K562 (cell line): ENCODE measurements at regions of chr11 and their contacts with region 1.

Region 1: GRCh38 chr11:76919887-76920746 is 59.4 kb downstream of the ACER3 start:
- DNase-seq: peak; percentile 61 to 87 (median 64)
- ATAC-seq: peak; percentile 85
- H3K4me3 ChIP-seq: no peak overlapping the region
- H3K27ac ChIP-seq: no peak overlapping the region
- H3K4me1 ChIP-seq: peaks cover 9 to 19% of the 10 kb centered on the region in 2 experiments; a peak in 4 of 5 replicates
- H3K27me3 ChIP-seq: no peaks in the 10 kb centered on the region
- CTCF ChIP-seq: peak; percentile 90 to 94 (median 93)
- EP300 ChIP-seq: no peak
- POLR2A ChIP-seq: no peak
- RAD21 ChIP-seq: peak; percentile 73 to 76

Region 2: DNA sequence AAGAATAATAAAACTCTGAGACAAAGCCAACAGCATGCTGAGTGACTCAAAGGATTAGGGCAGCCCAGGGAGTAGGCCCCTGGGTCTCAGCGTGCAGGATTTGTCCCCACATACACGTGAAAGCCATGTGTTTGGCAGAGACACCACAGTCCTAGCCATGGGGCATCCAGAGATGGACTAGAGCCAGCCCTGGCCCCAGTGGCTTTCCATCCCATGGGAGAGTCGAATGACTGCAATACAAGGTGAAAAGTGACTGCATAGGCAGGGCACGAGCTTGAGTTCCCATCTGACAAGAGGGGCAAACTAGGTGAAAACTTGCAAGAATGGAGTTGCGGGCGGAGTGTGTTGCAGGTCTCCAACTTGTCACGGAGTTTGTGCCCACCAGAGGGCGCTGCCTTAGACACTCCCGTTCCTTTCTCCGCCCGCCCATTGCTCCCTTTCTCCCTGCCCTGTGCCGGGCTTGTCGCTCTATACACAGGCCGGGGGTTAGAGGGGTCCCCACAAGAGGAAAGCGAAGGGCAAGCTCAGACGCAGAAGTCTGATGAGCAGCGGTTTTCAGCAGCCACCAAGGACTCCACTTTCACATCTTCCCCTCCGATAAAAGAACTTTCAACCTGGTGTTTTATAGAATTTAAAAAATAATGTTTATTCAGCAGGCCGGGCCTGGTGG is 112.8 kb before region 1 on chr11:
- CTCF ChIA-PET with region 1: interaction called, 54 read pairs
- POLR2A ChIA-PET with region 1: interaction called, 4 read pairs
- in situ Hi-C with region 1: loop called (anchors 5 kb)
- intact Hi-C with region 1: loop called (anchors 1 kb)
- DNase-seq: peak; percentile 84 to 92 (median 86)
- ATAC-seq: peak; percentile 98
- H3K4me3 ChIP-seq: no peak overlapping the region
- H3K27ac ChIP-seq: no peak overlapping the region
- H3K4me1 ChIP-seq: peaks cover 10 to 20% of the 10 kb centered on the region in 2 experiments; a peak in 4 of 5 replicates
- H3K27me3 ChIP-seq: no peaks in the 10 kb centered on the region
- CTCF ChIP-seq: peak; percentile 85 to 89 (median 89)
- EP300 ChIP-seq: no peak
- POLR2A ChIP-seq: no peak
- RAD21 ChIP-seq: peak; percentile 71 to 86

Region 3: GRCh38 chr11:76860539-76861475 is 59.3 kb before region 1 on chr11 and contains the start of gene ACER3:
- CTCF ChIA-PET with region 1: interaction called, 3 read pairs
- POLR2A ChIA-PET with region 1: interaction called, 4 read pairs
- in situ Hi-C with region 1: no loop called
- intact Hi-C with region 1: loop called (anchors 2 kb)
- DNase-seq: peak; percentile 96 to 99 (median 99)
- ATAC-seq: peak; percentile 97
- H3K4me3 ChIP-seq: peak within 1 kb of the TSS; percentile 94
- H3K27ac ChIP-seq: peak within 1 kb of the TSS; percentile 88
- H3K4me1 ChIP-seq: peaks cover 16 to 23% of the 10 kb centered on the region in 2 experiments; a peak in 4 of 5 replicates
- H3K27me3 ChIP-seq: no peaks in the 10 kb centered on the region
- CTCF ChIP-seq: peak in 1 of 3 experiments; percentile 26; a peak in 1 of 6 replicates
- EP300 ChIP-seq: no peak
- POLR2A ChIP-seq: peak; percentile 83
- RAD21 ChIP-seq: no peak
- polyA plus RNA-seq, gene ACER3: 2.0 to 3.0 TPM

Region 4: GRCh38 chr11:77047007-77047927 is 127.2 kb after region 1 on chr11:
- CTCF ChIA-PET with region 1: interaction called, 36 read pairs
- POLR2A ChIA-PET with region 1: no interaction called
- in situ Hi-C with region 1: no loop called
- intact Hi-C with region 1: loop called (anchors 1 kb)
- DNase-seq: peak; percentile 54 to 93 (median 73)
- ATAC-seq: peak; percentile 91
- H3K4me3 ChIP-seq: peak overlapping the region; percentile 37
- H3K27ac ChIP-seq: no peak overlapping the region
- H3K4me1 ChIP-seq: peaks cover 3 to 6% of the 10 kb centered on the region in 2 experiments; a peak in 4 of 5 replicates
- H3K27me3 ChIP-seq: no peaks in the 10 kb centered on the region
- CTCF ChIP-seq: peak; percentile 65 to 90 (median 69)
- EP300 ChIP-seq: no peak
- POLR2A ChIP-seq: no peak
- RAD21 ChIP-seq: peak; percentile 60 to 71

Region 5: GRCh38 chr11:77113382-77114088 is 193.4 kb after region 1 on chr11:
- CTCF ChIA-PET with region 1: interaction called, 3 read pairs
- POLR2A ChIA-PET with region 1: no interaction called
- in situ Hi-C with region 1: no loop called
- intact Hi-C with region 1: loop called (anchors 5 kb)
- DNase-seq: peak; percentile 58 to 70 (median 62)
- ATAC-seq: peak; percentile 75
- H3K4me3 ChIP-seq: no peak overlapping the region
- H3K27ac ChIP-seq: no peak overlapping the region
- H3K4me1 ChIP-seq: peaks cover 0 to 13% of the 10 kb centered on the region in 2 experiments; a peak in 2 of 5 replicates
- H3K27me3 ChIP-seq: peaks cover 6 to 71% of the 10 kb centered on the region in 2 experiments; a peak in 3 of 5 replicates
- CTCF ChIP-seq: peak; percentile 69 to 86 (median 71)
- EP300 ChIP-seq: no peak
- POLR2A ChIP-seq: no peak
- RAD21 ChIP-seq: peak; percentile 28; a peak in 2 of 4 replicates